ENCODE measurements at regions of chr1 and their contacts with region 1.

Region 1: DNA sequence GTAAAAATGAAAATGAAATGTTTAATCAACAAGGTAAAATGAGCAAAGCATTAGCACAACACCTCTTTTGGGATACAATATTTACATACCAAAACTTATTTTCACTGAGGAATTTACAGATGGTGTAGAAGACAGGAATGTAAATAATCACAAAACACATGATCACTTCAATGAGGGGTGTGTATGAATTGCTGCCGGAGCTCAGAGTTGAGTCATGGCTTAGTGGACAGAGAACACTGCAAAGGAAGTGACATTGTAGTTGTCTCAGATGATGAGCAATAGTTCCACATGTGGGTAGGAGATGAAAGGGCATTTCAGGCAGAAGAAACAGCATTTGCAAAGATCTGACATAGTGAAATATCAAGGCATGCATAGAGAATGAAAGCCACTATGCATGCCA is 5.6 kb upstream of the KPRP start:
- DNase-seq: peak; percentile 74
- H3K4me3 Mint-ChIP-seq: no peak overlapping the region
- H3K27ac Mint-ChIP-seq: no peak overlapping the region
- H3K4me1 Mint-ChIP-seq: peaks cover 12% of the 10 kb centered on the region
- H3K27me3 Mint-ChIP-seq: no peaks in the 10 kb centered on the region
- CTCF ChIP-seq: no peak

Region 2: DNA sequence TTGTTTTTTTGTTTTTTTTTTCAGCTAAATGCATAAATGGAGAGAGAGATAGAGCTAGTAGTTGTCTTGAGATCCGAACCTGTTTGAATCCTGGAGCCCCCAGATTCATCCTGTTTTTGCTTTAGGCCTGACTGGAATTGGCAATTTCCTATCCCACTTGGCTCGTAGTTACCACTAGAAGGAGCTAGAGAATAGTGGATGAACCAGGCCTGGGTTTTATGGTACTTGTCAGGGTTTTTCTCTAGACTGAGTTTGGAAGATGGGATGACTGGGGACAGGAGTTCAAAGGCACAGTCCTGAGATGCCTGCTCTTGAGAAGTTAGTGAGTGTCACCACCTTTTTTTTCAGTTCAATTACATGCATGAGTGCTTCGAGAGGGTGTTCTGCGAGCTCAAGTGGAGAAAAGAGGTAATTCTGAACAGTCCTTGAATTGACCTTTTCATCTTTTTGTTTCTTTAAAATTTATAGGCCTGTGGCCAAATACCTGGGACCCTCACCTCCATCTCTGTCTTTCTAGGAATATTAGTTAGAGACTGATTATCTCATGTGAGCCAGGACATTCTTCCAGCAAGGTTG is 1059.1 kb before region 1 on chr1:
- CTCF ChIA-PET with region 1: no interaction called
- POLR2A ChIA-PET with region 1: no interaction called
- intact Hi-C with region 1: no loop called
- DNase-seq: peak; percentile 60
- H3K4me3 Mint-ChIP-seq: no peak overlapping the region
- H3K27ac Mint-ChIP-seq: peak overlapping the region; percentile 43
- H3K4me1 Mint-ChIP-seq: no peaks in the 10 kb centered on the region
- H3K27me3 Mint-ChIP-seq: no peaks in the 10 kb centered on the region
- CTCF ChIP-seq: peak; percentile 74

Region 3: GRCh38 chr1:152599934-152600333 is 152.3 kb before region 1 on chr1 and contains the start of gene LCE3C:
- CTCF ChIA-PET with region 1: no interaction called
- POLR2A ChIA-PET with region 1: no interaction called
- intact Hi-C with region 1: no loop called
- DNase-seq: no peak
- H3K4me3 Mint-ChIP-seq: no peak within 1 kb of the TSS
- H3K27ac Mint-ChIP-seq: no peak within 1 kb of the TSS
- H3K4me1 Mint-ChIP-seq: no peaks in the 10 kb centered on the region
- H3K27me3 Mint-ChIP-seq: no peaks in the 10 kb centered on the region
- CTCF ChIP-seq: no peak
- total RNA-seq, gene LCE3C: not detected in 2 replicates

Region 4: GRCh38 chr1:152735648-152736047 is 16.6 kb before region 1 on chr1:
- CTCF ChIA-PET with region 1: interaction called, 3 read pairs
- POLR2A ChIA-PET with region 1: interaction called, 13 read pairs
- intact Hi-C with region 1: no loop called
- DNase-seq: peak; percentile 60
- H3K4me3 Mint-ChIP-seq: no peak overlapping the region
- H3K27ac Mint-ChIP-seq: no peak overlapping the region
- H3K4me1 Mint-ChIP-seq: peaks cover 11% of the 10 kb centered on the region
- H3K27me3 Mint-ChIP-seq: no peaks in the 10 kb centered on the region
- CTCF ChIP-seq: peak; percentile 67

Region 5: GRCh38 chr1:152836870-152837269 is 84.7 kb after region 1 on chr1:
- CTCF ChIA-PET with region 1: no interaction called
- POLR2A ChIA-PET with region 1: no interaction called
- intact Hi-C with region 1: no loop called
- DNase-seq: no peak
- H3K4me3 Mint-ChIP-seq: no peak overlapping the region
- H3K27ac Mint-ChIP-seq: peak overlapping the region; percentile 8
- H3K4me1 Mint-ChIP-seq: peaks cover 7% of the 10 kb centered on the region
- H3K27me3 Mint-ChIP-seq: no peaks in the 10 kb centered on the region
- CTCF ChIP-seq: no peak